ENCODE measurements at regions of chr9 and their contacts with region 1.

Region 1: DNA sequence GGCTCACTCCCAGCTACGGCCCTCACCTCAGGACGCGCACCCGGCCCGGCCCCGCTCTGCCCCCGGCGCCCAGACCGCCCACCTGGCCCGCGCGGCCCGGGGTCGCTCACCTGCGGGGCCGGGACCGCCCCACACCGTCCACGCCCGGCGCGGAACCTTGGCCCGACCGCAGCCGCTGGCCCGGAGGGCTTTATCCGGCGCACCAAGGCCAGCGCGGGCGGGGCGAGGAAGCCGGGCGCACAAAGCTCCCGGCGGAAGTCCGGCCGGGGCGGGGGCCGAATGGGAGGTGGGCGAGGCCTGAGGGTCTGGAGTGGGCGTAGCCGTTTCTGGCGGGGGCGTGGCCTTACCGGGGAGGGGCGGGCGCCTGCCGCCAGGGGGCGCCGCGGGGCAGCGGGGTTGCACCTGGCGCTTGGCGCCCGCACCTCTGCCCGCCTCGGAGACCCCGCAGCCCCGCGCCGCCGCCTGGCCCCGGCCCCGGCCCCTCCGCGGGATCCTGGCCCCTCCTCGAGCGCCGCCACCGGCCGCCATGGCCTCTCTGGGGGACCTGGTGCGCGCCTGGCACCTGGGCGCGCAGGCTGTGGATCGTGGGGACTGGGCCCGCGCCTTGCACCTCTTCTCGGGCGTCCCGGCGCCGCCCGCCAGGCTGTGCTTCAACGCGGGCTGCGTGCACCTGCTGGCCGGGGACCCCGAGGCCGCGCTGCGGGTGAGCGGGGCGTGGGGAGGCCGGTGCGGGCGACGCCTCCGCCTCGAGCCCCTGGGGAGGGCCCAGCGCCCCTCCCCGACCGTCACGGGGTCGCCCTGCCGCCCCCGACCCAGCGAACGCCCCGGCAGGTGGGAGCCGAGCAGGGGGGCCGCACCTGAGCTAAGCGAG is at the starts of genes EXD3 and NOXA1:
- DNase-seq: peak; percentile 93
- H3K4me3 Mint-ChIP-seq: peak within 1 kb of the TSS; percentile 77
- H3K27ac Mint-ChIP-seq: peak within 1 kb of the TSS; percentile 39
- H3K4me1 Mint-ChIP-seq: peaks cover 9% of the 10 kb centered on the region
- H3K27me3 Mint-ChIP-seq: no peaks in the 10 kb centered on the region
- CTCF ChIP-seq: peak; percentile 61
- total RNA-seq, gene EXD3: 17.1 and 23.9 TPM in 2 replicates
- total RNA-seq, gene NOXA1: 8.2 and 8.9 TPM in 2 replicates

Region 2: DNA sequence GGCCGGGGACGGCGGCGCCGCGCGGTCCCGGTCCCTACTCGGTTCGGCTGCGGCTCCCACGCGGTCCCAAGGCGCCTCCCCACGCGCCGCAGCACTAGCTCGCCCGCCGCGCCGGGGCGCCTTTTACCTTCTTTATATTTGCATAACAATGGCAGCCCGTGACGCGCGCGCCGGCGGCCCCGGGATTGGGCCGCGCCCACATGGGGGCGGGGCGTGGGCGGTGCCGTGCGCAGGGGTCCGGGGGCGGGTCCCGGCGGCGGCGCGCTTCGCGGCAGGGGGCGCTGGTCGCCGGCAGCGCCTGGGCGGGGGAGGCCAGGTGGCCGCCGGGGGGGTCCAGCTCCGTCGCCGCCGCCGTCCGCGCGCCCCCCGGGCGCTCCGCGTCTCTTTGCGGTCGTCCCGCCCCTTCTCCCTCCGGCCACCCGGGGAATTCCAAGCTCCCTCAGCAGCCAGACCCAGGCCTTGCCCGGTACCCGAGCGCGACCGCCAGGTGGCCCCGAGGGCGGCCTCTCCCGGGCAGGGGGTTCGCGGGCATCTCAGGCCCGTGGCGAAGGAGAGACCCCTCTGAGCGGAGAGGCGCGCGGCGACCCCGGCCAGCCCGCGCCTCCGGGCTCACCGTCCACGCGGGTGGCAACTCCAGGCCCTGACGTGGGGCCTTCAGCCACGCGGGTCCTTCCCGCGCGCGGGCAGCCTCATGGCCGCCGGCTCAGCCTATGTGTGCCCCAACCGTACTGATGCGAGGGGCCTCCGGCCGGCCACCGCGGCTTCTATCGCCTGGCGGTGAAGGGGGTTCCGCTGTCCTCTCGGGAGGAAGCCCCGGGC is 120.9 kb before region 1 on chr9 and contains the start of gene NRARP:
- CTCF ChIA-PET with region 1: no interaction called
- POLR2A ChIA-PET with region 1: interaction called, 5 read pairs
- intact Hi-C with region 1: loop called (anchors 5 kb)
- DNase-seq: peak; percentile 86
- H3K4me3 Mint-ChIP-seq: peak within 1 kb of the TSS; percentile 74
- H3K27ac Mint-ChIP-seq: no peak within 1 kb of the TSS
- H3K4me1 Mint-ChIP-seq: no peaks in the 10 kb centered on the region
- H3K27me3 Mint-ChIP-seq: no peaks in the 10 kb centered on the region
- CTCF ChIP-seq: peak; percentile 73
- total RNA-seq, gene NRARP: 1.4 and 2.2 TPM in 2 replicates

Region 3: GRCh38 chr9:137317718-137318511 is 105.3 kb before region 1 on chr9:
- CTCF ChIA-PET with region 1: no interaction called
- POLR2A ChIA-PET with region 1: no interaction called
- intact Hi-C with region 1: no loop called
- DNase-seq: no peak
- H3K4me3 Mint-ChIP-seq: no peak overlapping the region
- H3K27ac Mint-ChIP-seq: no peak overlapping the region
- H3K4me1 Mint-ChIP-seq: no peaks in the 10 kb centered on the region
- H3K27me3 Mint-ChIP-seq: no peaks in the 10 kb centered on the region
- CTCF ChIP-seq: no peak

Region 4: DNA sequence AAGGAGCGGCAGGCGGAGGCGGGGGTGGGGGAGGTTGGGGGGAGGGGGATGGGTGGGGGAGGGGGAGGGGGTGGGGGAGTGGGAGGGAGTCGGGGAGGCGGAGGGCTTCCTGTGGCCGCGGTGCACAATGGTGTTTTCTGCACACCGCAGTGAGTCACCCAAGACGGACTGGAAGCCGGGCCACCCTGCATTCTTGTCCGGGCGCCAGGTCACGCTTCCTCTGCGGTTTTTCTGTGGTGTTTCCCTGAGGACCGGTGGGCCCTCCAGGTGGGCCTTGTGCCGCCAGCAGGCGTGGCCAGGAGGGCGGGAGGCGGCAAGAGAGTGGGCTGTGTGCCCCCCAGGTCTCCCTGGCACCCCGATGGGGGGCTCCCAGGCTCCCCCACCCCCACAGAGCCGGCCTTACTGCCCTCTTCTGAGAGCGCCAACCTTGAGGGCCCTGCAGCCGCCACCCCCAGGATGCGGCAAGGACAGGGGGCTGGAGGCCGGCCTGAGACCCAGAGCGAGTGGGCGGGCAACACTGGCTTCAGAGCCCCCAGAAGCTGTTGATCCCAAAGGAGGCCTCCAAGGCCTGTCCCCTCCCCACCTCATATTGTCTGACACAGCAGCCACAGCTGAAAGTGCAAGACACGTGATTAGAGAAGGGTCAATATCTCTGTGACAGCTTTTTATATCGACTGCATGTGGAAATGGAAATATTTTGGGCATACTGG is 11.4 kb before region 1 on chr9:
- CTCF ChIA-PET with region 1: interaction called, 16 read pairs
- POLR2A ChIA-PET with region 1: interaction called, 62 read pairs
- intact Hi-C with region 1: no loop called
- DNase-seq: peak; percentile 97
- H3K4me3 Mint-ChIP-seq: peak overlapping the region; percentile 55
- H3K27ac Mint-ChIP-seq: peak overlapping the region; percentile 94
- H3K4me1 Mint-ChIP-seq: peaks cover 8% of the 10 kb centered on the region
- H3K27me3 Mint-ChIP-seq: no peaks in the 10 kb centered on the region
- CTCF ChIP-seq: no peak

Region 5: DNA sequence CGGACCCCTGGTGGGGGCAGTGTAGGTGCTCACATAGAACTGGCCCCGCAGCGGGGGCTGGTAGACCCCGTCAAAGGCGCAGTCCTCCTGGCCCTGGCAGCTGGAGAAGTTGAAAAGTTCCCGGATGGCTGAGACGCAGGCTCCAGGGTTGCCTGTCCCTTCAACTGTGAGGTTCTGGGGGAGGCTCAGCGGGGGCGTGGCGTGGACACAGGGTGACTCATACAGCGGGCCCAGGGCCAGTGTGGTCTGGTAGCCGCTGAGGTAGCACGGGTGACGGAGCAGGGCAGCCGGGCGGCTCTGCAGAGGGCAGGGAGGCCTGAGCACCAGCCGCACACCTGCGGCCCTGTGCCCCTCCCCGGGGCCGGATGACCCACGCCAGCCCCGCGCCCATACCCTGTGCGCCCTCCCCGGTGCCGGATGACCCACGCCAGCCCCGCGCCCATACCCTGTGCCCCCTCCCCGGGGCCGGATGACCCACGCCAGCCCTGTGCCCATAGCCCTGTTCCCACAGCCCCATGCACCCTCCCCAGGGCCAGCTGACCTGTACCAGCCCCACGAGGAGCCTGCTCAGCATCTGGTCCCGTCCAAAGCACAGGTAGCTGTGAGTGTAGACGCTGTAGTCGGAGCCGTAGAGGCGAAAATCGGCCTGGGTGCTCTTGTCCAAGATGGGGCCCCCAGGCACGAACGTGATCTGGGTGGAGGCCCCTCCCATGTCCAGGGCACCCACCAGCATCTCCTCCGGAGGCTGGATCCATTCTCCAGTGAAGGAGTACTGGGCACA is 12.9 kb after region 1 on chr9:
- CTCF ChIA-PET with region 1: interaction called, 3 read pairs
- POLR2A ChIA-PET with region 1: interaction called, 12 read pairs
- intact Hi-C with region 1: no loop called
- DNase-seq: peak; percentile 91
- H3K4me3 Mint-ChIP-seq: no peak overlapping the region
- H3K27ac Mint-ChIP-seq: no peak overlapping the region
- H3K4me1 Mint-ChIP-seq: no peaks in the 10 kb centered on the region
- H3K27me3 Mint-ChIP-seq: no peaks in the 10 kb centered on the region
- CTCF ChIP-seq: no peak

Measured in MCF 10A (cell line).